ENCODE measurements at regions of chr1 and their contacts with region 1.

Region 1: GRCh38 chr1:86704458-86704971 is at the start of gene SH3GLB1:
- DNase-seq: peak; percentile 90
- H3K4me3 ChIP-seq: peak within 1 kb of the TSS; percentile 86 to 95
- H3K27ac ChIP-seq: peak within 1 kb of the TSS; percentile 96 to 98
- H3K4me1 ChIP-seq: no peaks in the 10 kb centered on the region
- H3K27me3 ChIP-seq: no peaks in the 10 kb centered on the region
- CTCF ChIP-seq: peak; percentile 94 to 96 (median 95)
- POLR2A ChIP-seq: peak; percentile 72
- total RNA-seq, gene SH3GLB1: 26.9 to 44.0 TPM

Region 2: DNA sequence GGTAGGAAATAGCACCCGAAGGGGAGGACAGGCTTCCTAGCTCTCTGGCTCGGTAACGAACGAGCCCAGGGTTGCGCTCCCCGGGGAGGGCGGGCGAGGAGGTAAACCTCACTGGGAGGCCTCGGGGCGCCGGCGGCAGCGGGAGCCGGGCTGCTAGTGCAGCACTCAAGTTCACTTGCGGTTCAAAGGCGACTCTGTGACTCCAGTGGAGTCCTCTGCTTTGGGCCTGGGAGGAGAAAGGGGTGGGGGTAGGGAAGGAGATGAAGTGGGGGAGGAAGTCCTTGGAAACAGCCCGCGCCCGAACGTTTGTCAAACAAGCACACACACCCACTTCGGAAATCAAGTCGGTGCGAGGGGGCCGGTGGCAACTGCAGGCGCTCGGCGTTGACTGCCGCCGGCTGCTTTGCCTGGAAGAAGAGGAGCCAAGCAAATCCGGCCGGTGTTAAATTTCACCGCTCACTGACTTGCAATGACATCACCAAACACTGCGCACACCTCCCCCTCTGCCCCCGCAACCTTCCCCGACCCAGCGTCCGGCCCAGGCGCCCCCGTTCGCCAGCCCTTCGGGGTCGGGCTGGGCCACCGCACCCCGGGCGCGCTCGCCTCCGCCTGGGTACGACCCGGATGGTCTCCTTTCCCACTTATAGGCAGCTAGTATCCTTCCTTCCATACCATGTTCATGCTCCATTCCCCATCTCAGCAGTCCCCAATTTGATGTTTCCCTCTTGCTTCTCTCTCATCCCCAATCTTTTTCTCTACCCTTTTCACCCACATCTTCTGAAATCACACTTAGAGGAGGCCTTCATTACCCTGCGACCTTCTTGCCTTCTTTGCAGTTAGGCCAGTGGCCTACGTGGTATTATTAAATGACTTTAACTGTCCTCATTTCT is 547.7 kb before region 1 on chr1 and contains the start of gene COL24A1:
- intact Hi-C with region 1: no loop called
- DNase-seq: peak; percentile 29
- H3K4me3 ChIP-seq: peak within 1 kb of the TSS; percentile 15 to 21
- H3K27ac ChIP-seq: no peak within 1 kb of the TSS
- H3K4me1 ChIP-seq: no peaks in the 10 kb centered on the region
- H3K27me3 ChIP-seq: peaks cover 3% of the 10 kb centered on the region
- CTCF ChIP-seq: no peak
- POLR2A ChIP-seq: no peak
- total RNA-seq, gene COL24A1: 0.28 to 0.32 TPM

Region 3: DNA sequence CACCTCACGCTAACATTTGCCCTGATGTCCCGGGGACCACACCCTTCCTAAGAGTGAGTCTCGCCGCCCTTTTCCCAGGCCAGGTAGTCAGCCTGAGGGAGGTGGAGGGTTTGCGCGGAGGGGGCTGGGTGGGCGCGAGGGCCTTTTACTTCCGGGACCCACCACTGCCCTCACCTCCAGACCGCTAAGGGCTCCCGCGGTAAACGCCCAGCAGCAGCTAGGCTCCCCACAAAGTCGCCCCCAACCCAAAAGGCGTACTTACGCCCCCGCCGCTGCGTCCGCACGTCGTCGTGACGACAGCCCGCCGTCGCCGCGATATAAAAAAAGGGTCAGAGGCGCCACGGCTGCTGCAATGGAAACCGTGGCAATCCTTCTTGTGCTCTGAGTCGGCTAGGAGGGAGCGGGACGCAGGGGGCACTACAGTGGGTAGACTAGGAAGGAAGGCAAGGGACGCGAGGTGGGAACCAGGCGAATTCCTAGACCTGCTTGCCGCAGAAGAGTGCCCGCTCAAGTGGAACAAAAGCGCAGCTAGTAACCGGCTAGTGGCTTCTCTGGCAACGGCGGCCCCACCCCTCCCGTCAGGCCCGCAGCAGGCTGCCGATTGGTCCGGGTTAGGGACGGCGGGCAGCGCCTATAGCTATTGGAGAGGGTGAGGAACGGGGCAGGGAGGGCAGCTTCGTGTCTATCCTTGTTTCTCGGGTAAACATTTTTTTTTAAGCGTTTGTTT is 308.6 kb before region 1 on chr1 and contains the start of gene ODF2L:
- intact Hi-C with region 1: loop called (anchors 10 kb)
- DNase-seq: peak; percentile 93
- H3K4me3 ChIP-seq: peak within 1 kb of the TSS; percentile 79 to 87
- H3K27ac ChIP-seq: peak within 1 kb of the TSS; percentile 61 to 69
- H3K4me1 ChIP-seq: no peaks in the 10 kb centered on the region
- H3K27me3 ChIP-seq: no peaks in the 10 kb centered on the region
- CTCF ChIP-seq: peak in 1 of 4 experiments; percentile 5
- POLR2A ChIP-seq: peak; percentile 88
- total RNA-seq, gene ODF2L: 47.9 to 54.2 TPM

Region 4: DNA sequence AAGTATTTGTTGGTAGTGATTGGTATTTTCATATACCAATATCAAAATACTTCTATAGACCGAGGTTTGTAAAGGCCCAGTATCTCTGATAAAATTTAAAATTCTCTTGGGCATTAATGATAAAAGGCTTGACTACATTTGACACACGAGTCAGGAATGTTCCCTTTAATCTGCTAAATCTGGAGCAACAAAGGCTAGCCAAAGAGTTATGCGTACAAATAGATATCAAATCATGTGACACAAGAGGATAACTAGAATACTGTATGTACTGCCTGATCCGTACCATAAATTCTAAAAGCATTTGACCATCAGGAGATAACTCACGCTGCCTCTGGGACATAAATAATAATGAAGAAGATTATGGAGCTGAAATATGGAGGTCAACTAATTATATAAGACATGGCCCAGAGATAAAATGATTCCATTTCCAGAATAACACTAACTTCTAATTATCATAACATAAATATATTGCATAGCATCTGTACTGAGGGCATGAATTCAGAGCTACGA is 64.3 kb before region 1 on chr1:
- intact Hi-C with region 1: no loop called
- DNase-seq: no peak
- H3K4me3 ChIP-seq: no peak overlapping the region
- H3K27ac ChIP-seq: no peak overlapping the region
- H3K4me1 ChIP-seq: no peaks in the 10 kb centered on the region
- H3K27me3 ChIP-seq: no peaks in the 10 kb centered on the region
- CTCF ChIP-seq: no peak
- POLR2A ChIP-seq: no peak

Region 5: GRCh38 chr1:86774305-86775295 is 70.1 kb after region 1 on chr1:
- intact Hi-C with region 1: loop called (anchors 10 kb)
- DNase-seq: no peak
- H3K4me3 ChIP-seq: no peak overlapping the region
- H3K27ac ChIP-seq: peak overlapping the region in 1 of 2 donors; percentile 11
- H3K4me1 ChIP-seq: no peaks in the 10 kb centered on the region
- H3K27me3 ChIP-seq: no peaks in the 10 kb centered on the region
- CTCF ChIP-seq: no peak
- POLR2A ChIP-seq: no peak

Region 6: DNA sequence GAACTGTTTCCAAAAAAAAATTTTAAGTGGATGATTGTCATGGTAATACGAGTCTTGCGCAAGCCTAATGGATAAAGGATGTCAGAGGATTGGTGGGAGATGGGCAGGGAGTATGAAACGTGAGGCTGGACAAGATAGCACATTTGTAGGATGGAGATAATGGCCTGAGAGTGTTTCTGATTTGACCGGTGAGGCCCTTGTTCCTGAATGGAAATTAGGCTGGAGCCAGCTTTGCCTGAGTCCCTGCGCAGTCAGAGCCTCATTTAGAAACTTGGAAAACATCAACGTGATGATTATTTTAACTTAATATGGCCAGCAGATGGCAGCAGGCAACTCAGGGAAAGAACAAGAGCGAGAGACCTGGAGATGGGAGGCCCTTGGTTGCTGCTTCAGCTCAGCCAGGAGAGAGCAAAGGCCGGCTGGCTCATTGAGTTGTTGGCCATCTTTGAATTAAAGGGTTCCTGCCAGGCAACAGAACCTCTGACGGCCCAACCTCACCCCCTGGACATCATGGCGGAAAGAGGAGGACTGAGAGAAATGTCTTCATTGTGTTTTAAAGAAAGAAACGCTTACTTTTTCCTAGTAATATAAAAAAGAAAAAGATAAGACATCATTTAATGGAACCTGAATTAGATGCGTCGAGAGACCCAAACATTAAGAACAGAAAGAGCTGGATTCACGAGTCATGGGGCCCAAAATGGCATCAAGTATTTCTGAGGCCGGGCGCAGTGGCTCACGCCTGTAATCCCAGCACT is 129.1 kb after region 1 on chr1:
- intact Hi-C with region 1: loop called (anchors 10 kb)
- DNase-seq: peak; percentile 78
- H3K4me3 ChIP-seq: no peak overlapping the region
- H3K27ac ChIP-seq: no peak overlapping the region
- H3K4me1 ChIP-seq: no peaks in the 10 kb centered on the region
- H3K27me3 ChIP-seq: no peaks in the 10 kb centered on the region
- CTCF ChIP-seq: peak; percentile 20 to 75 (median 64)
- POLR2A ChIP-seq: no peak

Region 7: GRCh38 chr1:86913896-86914634 is 209.6 kb after region 1 on chr1 and contains the start of gene SELENOF:
- intact Hi-C with region 1: loop called (anchors 10 kb)
- DNase-seq: peak; percentile 99
- H3K4me3 ChIP-seq: peak within 1 kb of the TSS; percentile 83
- H3K27ac ChIP-seq: peak within 1 kb of the TSS; percentile 89
- H3K4me1 ChIP-seq: no peaks in the 10 kb centered on the region
- H3K27me3 ChIP-seq: no peaks in the 10 kb centered on the region
- CTCF ChIP-seq: peak in 2 of 4 experiments; percentile 16 to 21
- POLR2A ChIP-seq: peak; percentile 78
- total RNA-seq, gene SELENOF: 137 to 175 TPM

Region 8: GRCh38 chr1:86965012-86965826 is 260.7 kb after region 1 on chr1:
- intact Hi-C with region 1: loop called (anchors 10 kb)
- DNase-seq: no peak
- H3K4me3 ChIP-seq: no peak overlapping the region
- H3K27ac ChIP-seq: no peak overlapping the region
- H3K4me1 ChIP-seq: no peaks in the 10 kb centered on the region
- H3K27me3 ChIP-seq: no peaks in the 10 kb centered on the region
- CTCF ChIP-seq: peak in 3 of 4 experiments; percentile 44 to 52 (median 45)
- POLR2A ChIP-seq: no peak

Region 9: DNA sequence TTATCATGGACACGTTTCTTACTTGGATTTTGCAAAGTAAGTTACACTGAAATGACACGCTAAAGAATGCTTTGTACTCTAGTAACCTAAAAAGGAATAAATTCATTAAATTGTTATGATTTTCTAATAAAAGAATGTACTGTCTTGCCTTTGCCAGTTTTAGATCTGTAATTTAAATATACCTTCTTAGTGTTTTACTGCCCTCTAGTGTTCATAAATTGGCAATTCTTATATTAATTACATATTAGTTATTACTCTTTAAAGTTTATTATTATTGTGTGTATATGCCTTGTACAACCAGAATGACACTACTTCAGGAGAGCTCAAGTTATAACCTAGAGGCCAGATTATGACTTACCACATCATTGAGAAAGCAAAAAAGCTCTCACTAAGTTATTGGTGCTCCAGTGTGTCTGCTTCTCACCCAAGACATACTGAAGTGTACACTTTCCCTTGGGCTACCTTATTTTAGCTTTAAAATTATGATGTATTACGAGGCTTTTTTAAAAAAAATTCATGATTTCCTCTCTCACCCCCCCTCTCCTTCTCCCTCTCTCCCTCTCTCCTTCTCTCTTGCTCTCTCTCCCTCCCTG is 379.8 kb after region 1 on chr1:
- intact Hi-C with region 1: loop called (anchors 10 kb)
- DNase-seq: no peak
- H3K4me3 ChIP-seq: no peak overlapping the region
- H3K27ac ChIP-seq: no peak overlapping the region
- H3K4me1 ChIP-seq: no peaks in the 10 kb centered on the region
- H3K27me3 ChIP-seq: no peaks in the 10 kb centered on the region
- CTCF ChIP-seq: peak in 3 of 4 experiments; percentile 44 to 67 (median 57)
- POLR2A ChIP-seq: no peak

Measured in prostate gland (tissue), 2 donors.